WTC11 (cell line): ENCODE measurements at regions of chr12 and their contacts with region 1.

Region 1: DNA sequence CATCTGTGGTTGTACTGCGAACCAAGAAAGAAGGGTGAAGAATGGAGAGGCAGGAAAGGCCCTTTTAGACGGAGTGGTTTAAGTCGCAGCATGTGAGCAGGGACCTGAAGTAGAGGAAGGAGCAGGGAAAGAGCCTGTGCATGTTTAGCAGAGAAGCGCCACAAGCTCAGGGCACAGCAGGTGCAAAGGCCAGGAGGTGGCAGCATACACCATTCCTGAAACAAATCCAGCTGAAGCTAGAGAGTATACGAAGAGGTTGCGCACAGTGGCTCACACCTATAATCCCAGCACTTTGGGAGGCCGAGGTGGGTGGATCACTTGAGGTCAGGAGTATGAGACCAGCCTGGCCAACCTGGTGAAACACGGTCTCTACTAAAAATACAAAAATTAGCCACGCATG is 49.9 kb downstream of the HELB start:
- DNase-seq: peak; percentile 70
- ATAC-seq: peak; percentile 93
- H3K4me3 Mint-ChIP-seq: no peak overlapping the region
- H3K27ac Mint-ChIP-seq: peak overlapping the region; percentile 28; the same call in 1 of the 2 replicates
- H3K4me1 Mint-ChIP-seq: peaks cover 12% of the 10 kb centered on the region
- H3K27me3 Mint-ChIP-seq: no peaks in the 10 kb centered on the region
- CTCF ChIP-seq: no peak; the same call in 1 of the 2 replicates

Region 2: GRCh38 chr12:66287275-66287674 is 64.9 kb before region 1 on chr12:
- CTCF ChIA-PET with region 1: no interaction called
- POLR2A ChIA-PET with region 1: no interaction called
- DNase-seq: no peak
- ATAC-seq: no peak
- H3K4me3 Mint-ChIP-seq: no peak overlapping the region
- H3K27ac Mint-ChIP-seq: no peak overlapping the region
- H3K4me1 Mint-ChIP-seq: no peaks in the 10 kb centered on the region
- H3K27me3 Mint-ChIP-seq: no peaks in the 10 kb centered on the region
- CTCF ChIP-seq: no peak

Region 3: DNA sequence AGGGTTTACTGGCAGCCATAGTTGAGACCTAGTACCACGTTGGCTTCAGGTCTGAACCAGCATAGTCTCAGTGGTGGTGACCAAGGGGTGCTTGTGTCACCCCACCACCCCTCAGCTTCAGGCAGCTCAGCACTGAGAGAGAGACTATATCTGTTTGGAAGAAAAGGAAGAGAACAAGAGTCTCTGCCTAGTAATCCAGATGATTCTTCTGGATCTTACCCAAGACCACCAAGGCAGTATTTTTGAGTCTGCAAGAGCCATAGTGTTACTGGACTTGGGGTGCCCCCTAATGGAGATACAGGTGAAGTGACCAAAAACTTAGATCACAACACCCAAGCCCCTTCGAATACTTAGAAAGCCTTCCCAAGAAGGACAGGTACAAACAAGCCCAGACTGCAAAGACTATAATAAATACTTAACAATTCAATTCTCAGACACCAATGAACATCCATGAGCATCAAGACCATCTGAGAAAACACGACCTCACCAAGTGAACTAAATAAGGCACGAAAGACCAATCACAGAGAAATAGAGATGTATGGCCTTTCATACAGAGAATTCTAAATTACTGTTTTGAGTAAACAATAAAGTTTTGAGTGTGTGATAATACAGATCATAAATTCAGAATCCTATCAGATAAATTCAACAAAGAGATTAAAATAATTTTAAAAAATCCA is 57.1 kb after region 1 on chr12:
- CTCF ChIA-PET with region 1: interaction called, 22 read pairs
- POLR2A ChIA-PET with region 1: no interaction called
- DNase-seq: peak; percentile 45
- ATAC-seq: peak; percentile 87
- H3K4me3 Mint-ChIP-seq: no peak overlapping the region
- H3K27ac Mint-ChIP-seq: no peak overlapping the region
- H3K4me1 Mint-ChIP-seq: peaks cover 16% of the 10 kb centered on the region
- H3K27me3 Mint-ChIP-seq: no peaks in the 10 kb centered on the region; the same call in 1 of the 2 replicates
- CTCF ChIP-seq: peak; percentile 57

Region 4: GRCh38 chr12:66693901-66694675 is 341.9 kb after region 1 on chr12:
- CTCF ChIA-PET with region 1: interaction called, 13 read pairs
- POLR2A ChIA-PET with region 1: no interaction called
- DNase-seq: no peak
- ATAC-seq: peak; percentile 81
- H3K4me3 Mint-ChIP-seq: no peak overlapping the region
- H3K27ac Mint-ChIP-seq: no peak overlapping the region
- H3K4me1 Mint-ChIP-seq: peaks cover 26% of the 10 kb centered on the region
- H3K27me3 Mint-ChIP-seq: no peaks in the 10 kb centered on the region
- CTCF ChIP-seq: peak; percentile 29; the same call in 1 of the 2 replicates